ENCODE measurements at regions of chr6 and their contacts with region 1.

Region 1: DNA sequence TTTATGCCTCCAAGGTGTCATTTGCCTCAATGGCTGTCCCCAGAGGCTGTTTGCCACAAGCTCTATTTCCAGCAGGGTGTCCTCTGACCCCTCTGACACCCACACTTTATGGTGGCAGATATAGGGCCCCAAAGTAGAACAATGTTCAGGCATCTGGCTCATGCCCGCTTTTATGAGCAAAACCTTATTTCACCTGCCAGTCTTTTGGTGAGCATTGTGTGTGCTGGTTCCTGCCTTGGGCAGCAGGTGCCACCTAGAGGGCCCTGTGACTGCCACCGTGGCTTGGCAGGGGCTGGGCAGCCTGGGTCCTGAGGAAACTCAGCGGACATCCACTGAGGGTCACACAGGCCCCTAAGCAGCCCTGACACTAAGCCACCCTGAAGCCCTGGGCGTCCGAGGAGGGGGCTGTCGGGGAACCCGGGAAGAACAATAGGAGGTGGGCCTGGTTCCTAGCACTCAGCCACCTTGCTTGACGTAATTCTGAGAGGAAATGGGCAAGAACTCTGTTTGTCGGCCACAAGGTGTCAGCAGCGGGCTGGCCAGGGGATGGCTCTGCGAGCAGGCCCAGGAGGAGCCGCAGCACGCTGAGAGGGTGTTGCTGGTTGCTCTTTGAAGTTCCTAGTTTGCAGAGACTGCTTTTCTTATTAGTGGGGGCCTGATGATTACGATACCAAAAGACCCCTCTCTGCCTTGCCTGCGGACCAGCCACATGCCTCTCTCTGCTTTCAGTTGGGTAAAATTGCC is 148.9 kb downstream of the SCML4 start:
- DNase-seq: peak; percentile 89
- H3K4me3 ChIP-seq: peak overlapping the region; percentile 21
- H3K27ac ChIP-seq: no peak overlapping the region
- H3K4me1 ChIP-seq: peaks cover 25% of the 10 kb centered on the region
- CTCF ChIP-seq: peak; percentile 100

Region 2: GRCh38 chr6:107132330-107132954 is 542.7 kb before region 1 on chr6:
- CTCF ChIA-PET with region 1: no interaction called
- POLR2A ChIA-PET with region 1: interaction called, 3 read pairs
- intact Hi-C with region 1: loop called (anchors 1 kb)
- DNase-seq: peak; percentile 71
- H3K4me3 ChIP-seq: no peak overlapping the region
- H3K27ac ChIP-seq: no peak overlapping the region
- H3K4me1 ChIP-seq: peaks cover 13% of the 10 kb centered on the region
- CTCF ChIP-seq: peak; percentile 86

Region 3: DNA sequence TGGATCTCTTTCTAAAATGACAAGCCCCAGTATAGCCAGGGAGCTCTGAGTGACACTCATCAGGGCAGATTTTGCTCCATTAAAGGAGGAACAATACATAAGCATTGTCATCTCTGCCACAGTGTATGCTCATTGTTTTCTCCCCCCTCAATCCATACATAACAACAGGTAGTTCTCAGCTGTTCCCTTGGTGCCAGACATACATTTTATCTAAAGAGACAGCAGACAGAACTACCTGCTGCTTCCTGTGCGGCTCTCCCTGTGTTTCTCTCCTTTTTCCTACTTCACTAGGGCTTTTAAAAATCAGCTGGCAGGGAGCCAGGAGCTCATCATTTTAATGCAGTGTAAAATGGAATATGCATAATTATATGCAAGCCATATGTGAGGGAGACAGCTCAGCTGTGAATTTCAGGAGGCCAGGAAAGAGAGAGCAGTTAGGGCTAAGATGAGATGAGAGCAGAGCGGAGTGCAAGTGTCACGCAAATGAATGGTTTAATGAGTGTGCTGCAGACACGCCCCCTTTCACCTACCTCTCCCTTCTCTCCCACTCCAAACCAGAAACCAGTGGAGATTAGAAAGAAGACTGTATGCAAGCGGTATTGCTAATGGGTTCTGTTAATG is 89.2 kb before region 1 on chr6:
- CTCF ChIA-PET with region 1: no interaction called
- POLR2A ChIA-PET with region 1: no interaction called
- intact Hi-C with region 1: no loop called
- DNase-seq: no peak
- H3K4me3 ChIP-seq: no peak overlapping the region
- H3K27ac ChIP-seq: no peak overlapping the region
- H3K4me1 ChIP-seq: peaks cover 13% of the 10 kb centered on the region
- CTCF ChIP-seq: no peak

Region 4: DNA sequence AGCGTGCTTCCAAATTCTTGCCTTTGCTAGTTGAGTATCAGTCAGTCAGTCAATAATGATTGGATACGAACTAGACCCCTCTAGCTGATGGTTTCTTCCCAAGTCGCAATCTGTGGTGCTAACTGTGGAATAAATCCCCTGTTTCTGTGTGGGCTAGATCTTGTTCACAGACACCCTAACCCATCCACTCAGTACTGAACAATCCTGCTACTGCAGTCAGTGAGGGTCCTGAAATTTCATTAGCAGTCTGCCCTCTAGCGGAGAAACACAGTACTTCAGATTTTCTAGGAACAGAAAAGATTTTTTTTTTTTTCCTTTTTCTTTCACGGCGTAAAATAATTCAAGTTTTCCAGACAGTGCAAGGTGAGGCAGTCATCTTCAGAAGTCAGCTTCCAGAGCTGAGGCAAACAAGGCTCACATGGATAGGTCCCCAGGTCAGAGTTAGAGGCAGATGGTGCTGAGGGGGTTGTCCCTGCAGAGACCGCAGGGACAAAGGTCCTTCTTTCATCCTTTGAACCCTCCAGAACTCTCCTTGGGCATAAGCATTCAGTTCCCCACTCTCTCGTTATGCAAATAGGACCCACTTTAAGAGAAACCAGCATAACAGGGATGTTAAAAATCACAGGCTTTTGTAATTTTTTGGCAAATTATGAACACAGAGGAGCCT is 29.3 kb after region 1 on chr6:
- CTCF ChIA-PET with region 1: no interaction called
- POLR2A ChIA-PET with region 1: no interaction called
- intact Hi-C with region 1: loop called (anchors 2 kb)
- DNase-seq: peak; percentile 69
- H3K4me3 ChIP-seq: no peak overlapping the region
- H3K27ac ChIP-seq: no peak overlapping the region
- H3K4me1 ChIP-seq: no peaks in the 10 kb centered on the region
- CTCF ChIP-seq: peak; percentile 96

Region 5: DNA sequence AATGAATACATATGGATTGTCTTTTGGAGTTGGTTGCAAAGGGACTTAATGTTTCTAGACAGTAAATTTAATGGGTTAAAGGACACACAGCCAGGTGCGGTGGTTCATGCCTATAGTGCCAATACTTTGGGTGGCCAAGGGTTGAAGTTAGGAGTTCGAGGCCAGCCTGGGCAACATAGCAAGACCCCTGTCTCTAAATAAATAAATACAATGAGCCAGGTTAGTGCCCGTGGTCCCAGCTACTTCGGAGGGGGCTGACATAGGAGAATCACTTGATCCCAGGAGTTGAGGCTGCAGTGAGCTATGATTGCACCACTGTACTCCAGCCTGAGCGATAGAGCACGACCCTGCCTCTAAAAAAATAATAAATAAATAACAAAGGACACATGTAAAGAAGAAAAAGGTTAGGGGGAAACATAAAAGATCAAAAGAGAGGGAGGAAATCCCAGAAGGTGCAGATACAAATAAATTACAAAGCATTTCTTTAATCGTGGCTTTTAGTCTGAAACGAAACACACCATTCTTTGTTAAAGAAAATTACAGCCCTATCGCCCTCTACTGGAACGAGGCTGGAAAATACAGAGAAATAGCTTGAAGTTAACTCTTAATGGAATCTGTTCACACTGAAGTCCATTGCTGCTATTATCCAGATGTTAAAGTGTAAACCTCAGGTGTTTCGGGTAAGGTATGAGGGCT is 191.6 kb after region 1 on chr6:
- CTCF ChIA-PET with region 1: no interaction called
- POLR2A ChIA-PET with region 1: interaction called, 3 read pairs
- intact Hi-C with region 1: loop called (anchors 5 kb)
- DNase-seq: peak; percentile 57
- H3K4me3 ChIP-seq: no peak overlapping the region
- H3K27ac ChIP-seq: no peak overlapping the region
- H3K4me1 ChIP-seq: peaks cover 13% of the 10 kb centered on the region
- CTCF ChIP-seq: peak; percentile 85

Region 6: DNA sequence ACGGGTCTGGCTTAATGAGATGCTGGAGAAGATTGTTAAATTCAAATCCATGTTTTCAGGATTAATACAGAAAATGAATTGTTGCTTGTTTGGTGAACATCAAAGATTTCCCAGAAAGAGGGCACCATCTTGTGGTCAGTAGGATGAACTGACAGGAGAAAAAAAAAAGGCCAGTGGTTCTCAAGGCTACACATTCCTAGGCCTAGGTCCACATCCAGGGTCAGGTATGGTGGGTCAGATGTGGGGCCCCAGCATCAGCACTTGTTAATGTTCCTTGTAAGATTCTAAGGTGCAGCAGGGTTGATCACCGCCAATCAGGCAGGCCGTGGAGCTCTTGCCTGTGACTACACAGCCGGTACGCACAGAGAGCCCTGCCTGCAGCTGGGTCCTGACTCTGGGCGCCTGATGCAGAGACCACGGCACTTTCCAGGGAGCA is 851.6 kb after region 1 on chr6:
- CTCF ChIA-PET with region 1: no interaction called
- POLR2A ChIA-PET with region 1: no interaction called
- intact Hi-C with region 1: loop called (anchors 10 kb)
- DNase-seq: peak; percentile 54
- H3K4me3 ChIP-seq: no peak overlapping the region
- H3K27ac ChIP-seq: no peak overlapping the region
- H3K4me1 ChIP-seq: no peaks in the 10 kb centered on the region
- CTCF ChIP-seq: peak; percentile 90